Psoas muscle (tissue), 8 donors: ENCODE measurements at regions of chr6 and their contacts with region 1.

Region 1: GRCh38 chr6:32885698-32886286 is 31.8 kb downstream of the PSMB9 start:
- DNase-seq: no peak
- ATAC-seq: peak; percentile 62 to 78 (median 66)
- H3K4me3 ChIP-seq: no peak overlapping the region
- H3K27ac ChIP-seq: no peak overlapping the region
- H3K4me1 ChIP-seq: no peaks in the 10 kb centered on the region
- H3K27me3 ChIP-seq: no peaks in the 10 kb centered on the region
- CTCF ChIP-seq: peak; percentile 71

Region 2: DNA sequence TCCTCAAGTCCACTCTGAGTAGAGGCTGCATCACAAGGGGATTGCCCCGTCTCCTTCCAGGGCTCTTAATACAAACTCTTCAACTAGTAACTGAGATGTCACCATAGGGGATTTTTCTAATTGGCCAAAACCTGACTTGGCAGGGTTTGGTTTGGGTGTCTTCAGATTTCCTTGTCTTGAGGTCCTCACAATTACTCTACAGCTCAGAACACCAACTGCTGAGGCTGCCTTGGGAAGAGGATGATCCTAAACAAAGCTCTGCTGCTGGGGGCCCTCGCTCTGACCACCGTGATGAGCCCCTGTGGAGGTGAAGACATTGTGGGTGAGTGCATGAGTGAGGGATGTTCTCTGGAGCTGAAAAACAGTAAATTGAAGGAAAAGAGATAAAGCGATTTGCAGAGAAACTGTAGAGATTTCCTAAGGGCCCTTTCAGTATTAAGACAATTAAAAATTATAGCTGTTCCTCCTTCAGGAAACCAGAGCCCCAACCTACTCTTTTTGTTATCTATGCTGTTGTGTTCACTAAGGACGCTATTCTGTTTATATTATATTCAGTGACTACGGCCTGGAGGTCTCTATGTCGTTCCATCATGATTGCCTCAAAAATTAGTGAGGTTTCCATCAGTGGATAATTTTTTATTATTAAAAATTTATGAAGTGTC is 248.4 kb before region 1 on chr6 and contains the start of gene HLA-DQA1:
- intact Hi-C with region 1: no loop called
- DNase-seq: no peak
- ATAC-seq: no peak
- H3K4me3 ChIP-seq: no peak within 1 kb of the TSS
- H3K27ac ChIP-seq: no peak within 1 kb of the TSS
- H3K4me1 ChIP-seq: no peaks in the 10 kb centered on the region
- H3K27me3 ChIP-seq: peaks cover 0 to 4% (median 0%) of the 10 kb centered on the region in 3 donors
- CTCF ChIP-seq: no peak
- total RNA-seq, gene HLA-DQA1: 1.3 to 7.8 (median 6.2) TPM

Region 3: DNA sequence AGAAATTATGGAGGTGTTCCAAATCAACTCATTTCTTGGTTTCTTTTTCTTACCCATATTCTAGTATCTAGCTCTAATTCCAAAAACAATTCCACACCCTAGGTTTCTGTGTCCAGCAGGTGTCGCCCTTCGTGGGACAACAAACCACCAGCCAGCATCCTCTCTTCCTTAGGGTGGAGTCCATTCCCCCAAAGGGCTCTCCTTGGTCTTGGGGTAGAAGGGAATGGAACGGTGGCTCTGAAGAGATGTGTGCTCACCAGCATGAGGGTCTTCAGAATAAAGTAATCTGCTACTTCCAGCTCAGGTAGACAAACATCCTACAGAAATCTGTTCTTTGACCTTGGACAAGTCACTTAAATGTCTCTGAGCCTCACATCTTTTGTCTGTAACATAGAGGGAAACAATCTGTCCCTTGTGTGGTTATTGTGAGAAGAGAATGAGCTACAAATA is 47.9 kb after region 1 on chr6:
- intact Hi-C with region 1: loop called (anchors 5 kb)
- DNase-seq: peak; percentile 77 to 85
- ATAC-seq: peak; percentile 72 to 89 (median 80)
- H3K4me3 ChIP-seq: no peak overlapping the region
- H3K27ac ChIP-seq: no peak overlapping the region
- H3K4me1 ChIP-seq: no peaks in the 10 kb centered on the region
- H3K27me3 ChIP-seq: no peaks in the 10 kb centered on the region
- CTCF ChIP-seq: peak; percentile 88

Region 4: DNA sequence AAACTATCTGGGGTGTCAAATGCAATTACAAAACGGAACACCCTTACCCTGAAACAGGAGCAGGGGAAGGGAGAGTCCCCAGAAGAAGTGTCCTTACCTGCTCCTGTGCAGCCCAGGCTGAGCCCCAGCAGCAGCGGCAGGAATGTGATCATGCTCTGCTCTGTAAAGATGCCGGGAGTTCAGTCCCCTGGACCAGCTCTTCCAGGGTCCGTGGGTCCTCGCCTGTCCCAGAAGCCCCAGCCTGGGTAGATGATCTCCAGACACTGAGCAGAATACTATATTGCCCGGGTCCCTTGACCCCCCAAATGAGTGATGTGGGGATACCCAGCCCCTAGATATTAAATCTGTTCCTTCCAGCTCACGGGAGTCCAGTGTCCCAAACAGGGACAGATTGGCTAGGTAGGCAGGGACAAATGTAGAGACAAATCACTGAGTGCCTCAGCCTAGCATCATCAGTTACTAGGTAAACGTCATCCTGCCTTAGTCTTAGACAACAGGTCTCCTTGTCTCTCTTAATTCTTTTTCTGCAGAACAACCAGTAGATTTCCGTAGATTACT is 54.9 kb after region 1 on chr6 and contains the start of gene HLA-DMB:
- intact Hi-C with region 1: loop called (anchors 5 kb)
- DNase-seq: no peak
- ATAC-seq: peak; percentile 97 to 100 (median 97)
- H3K4me3 ChIP-seq: peak within 1 kb of the TSS; percentile 63
- H3K27ac ChIP-seq: peak within 1 kb of the TSS; percentile 50
- H3K4me1 ChIP-seq: peaks cover 4% of the 10 kb centered on the region
- H3K27me3 ChIP-seq: no peaks in the 10 kb centered on the region
- CTCF ChIP-seq: no peak
- total RNA-seq, gene HLA-DMB: 1.4 to 7.6 (median 3.6) TPM

Region 5: DNA sequence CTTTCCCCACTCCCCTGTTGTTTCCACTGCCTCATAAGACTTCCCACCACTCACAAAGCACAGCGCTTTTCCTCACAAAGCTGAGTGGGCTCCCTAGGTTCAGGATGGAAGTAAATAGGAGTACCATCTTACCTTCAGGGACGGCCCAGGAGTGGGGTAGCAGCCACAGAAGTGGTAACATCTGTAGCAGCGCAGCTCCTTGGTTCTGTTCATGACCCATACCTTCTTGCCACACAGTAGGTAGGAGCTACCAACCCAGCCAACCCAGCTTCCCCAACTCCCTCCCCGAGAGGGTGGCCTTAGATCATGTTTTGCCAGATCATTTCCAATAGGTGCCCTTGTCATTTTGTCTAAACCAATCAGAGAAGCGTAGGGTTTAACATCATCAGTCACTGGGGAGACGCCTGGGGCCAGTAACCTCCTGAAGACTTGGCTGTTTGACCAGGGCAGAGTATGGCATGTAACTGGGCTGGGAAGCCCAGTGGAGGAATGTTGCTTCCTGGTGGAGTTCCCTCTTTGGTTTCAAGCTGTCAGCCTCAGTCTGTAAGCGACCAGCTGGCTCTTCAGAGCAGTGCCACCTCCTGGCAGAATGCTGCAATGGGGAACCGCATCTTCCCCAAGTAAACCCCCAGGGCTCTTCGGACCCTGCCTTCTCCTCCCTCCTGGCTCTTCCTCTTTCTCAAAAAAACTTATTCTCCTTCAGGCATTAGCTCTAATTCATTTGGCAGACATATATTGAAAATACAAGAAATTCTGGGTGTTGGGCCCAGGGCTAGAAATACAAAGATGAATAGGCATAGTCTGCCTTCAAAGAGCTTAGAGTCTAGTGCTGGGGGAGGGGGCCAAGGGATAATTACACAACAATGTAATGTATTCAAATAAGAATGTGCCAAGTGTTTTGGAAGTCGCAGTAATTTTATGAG is 67.3 kb after region 1 on chr6 and contains the start of gene HLA-DMA:
- intact Hi-C with region 1: loop called in 1 of 2 experiments (anchors 5 kb)
- DNase-seq: peak; percentile 81 to 89
- ATAC-seq: peak; percentile 99 to 100 (median 100)
- H3K4me3 ChIP-seq: peak within 1 kb of the TSS; percentile 54
- H3K27ac ChIP-seq: peak within 1 kb of the TSS; percentile 79
- H3K4me1 ChIP-seq: peaks cover 18% of the 10 kb centered on the region
- H3K27me3 ChIP-seq: no peaks in the 10 kb centered on the region
- CTCF ChIP-seq: peak; percentile 87
- total RNA-seq, gene HLA-DMA: 3.2 to 12.0 (median 9.4) TPM

Region 6: GRCh38 chr6:32984605-32985389 is 99.0 kb after region 1 on chr6:
- intact Hi-C with region 1: loop called (anchors 2 kb)
- DNase-seq: peak; percentile 89 to 93
- ATAC-seq: peak; percentile 79 to 85 (median 84)
- H3K4me3 ChIP-seq: no peak overlapping the region
- H3K27ac ChIP-seq: peak overlapping the region; percentile 48
- H3K4me1 ChIP-seq: peaks cover 10% of the 10 kb centered on the region
- H3K27me3 ChIP-seq: no peaks in the 10 kb centered on the region
- CTCF ChIP-seq: peak; percentile 92